K562 (cell line): ENCODE measurements at regions of chr10 and their contacts with region 1.

Region 1: DNA sequence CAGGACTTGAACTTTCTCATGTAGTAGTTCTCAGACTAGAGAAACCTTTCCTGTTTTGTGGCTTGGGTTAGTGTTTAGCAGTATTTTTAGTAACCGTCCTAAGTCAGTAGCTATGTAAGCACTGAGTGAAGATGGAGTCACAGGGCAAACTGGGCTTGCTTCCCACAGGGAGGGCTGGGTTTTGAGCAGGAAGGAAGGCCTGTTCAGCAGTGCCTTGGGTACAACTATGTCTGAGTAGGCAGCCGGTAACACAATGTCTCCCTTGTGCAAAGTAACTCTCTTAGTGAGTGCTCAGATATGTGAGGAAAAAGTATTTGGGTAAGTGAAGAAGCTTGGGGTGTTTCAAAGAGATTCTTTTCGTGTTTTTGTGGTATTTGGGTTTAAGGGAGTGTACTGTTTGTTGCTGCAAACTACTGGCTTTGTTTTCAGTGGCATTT is 96.4 kb downstream of the CCSER2 start:
- DNase-seq: no peak
- ATAC-seq: peak; percentile 66
- H3K4me3 ChIP-seq: no peak overlapping the region
- H3K27ac ChIP-seq: no peak overlapping the region
- H3K4me1 ChIP-seq: no peaks in the 10 kb centered on the region; a peak in 2 of 5 replicates
- H3K27me3 ChIP-seq: no peaks in the 10 kb centered on the region
- CTCF ChIP-seq: no peak
- EP300 ChIP-seq: no peak
- POLR2A ChIP-seq: no peak
- RAD21 ChIP-seq: no peak

Region 2: GRCh38 chr10:84352251-84352842 is 72.4 kb before region 1 on chr10:
- CTCF ChIA-PET with region 1: no interaction called
- POLR2A ChIA-PET with region 1: no interaction called
- in situ Hi-C with region 1: no loop called
- intact Hi-C with region 1: loop called (anchors 5 kb)
- DNase-seq: peak; percentile 67 to 86 (median 74)
- ATAC-seq: peak; percentile 99
- H3K4me3 ChIP-seq: no peak overlapping the region
- H3K27ac ChIP-seq: no peak overlapping the region
- H3K4me1 ChIP-seq: no peaks in the 10 kb centered on the region; a peak in 1 of 5 replicates
- H3K27me3 ChIP-seq: no peaks in the 10 kb centered on the region
- CTCF ChIP-seq: peak; percentile 86 to 90 (median 87)
- EP300 ChIP-seq: no peak
- POLR2A ChIP-seq: no peak
- RAD21 ChIP-seq: peak; percentile 52 to 75

Region 3: GRCh38 chr10:84632866-84633265 is 208.1 kb after region 1 on chr10:
- CTCF ChIA-PET with region 1: no interaction called
- POLR2A ChIA-PET with region 1: no interaction called
- in situ Hi-C with region 1: no loop called
- intact Hi-C with region 1: no loop called
- DNase-seq: no peak
- ATAC-seq: no peak
- H3K4me3 ChIP-seq: no peak overlapping the region
- H3K27ac ChIP-seq: no peak overlapping the region
- H3K4me1 ChIP-seq: no peaks in the 10 kb centered on the region
- H3K27me3 ChIP-seq: no peaks in the 10 kb centered on the region; a peak in 1 of 5 replicates
- CTCF ChIP-seq: no peak
- EP300 ChIP-seq: no peak
- POLR2A ChIP-seq: no peak
- RAD21 ChIP-seq: no peak